ENCODE measurements at regions of chr4 and their contacts with region 1.

Region 1: DNA sequence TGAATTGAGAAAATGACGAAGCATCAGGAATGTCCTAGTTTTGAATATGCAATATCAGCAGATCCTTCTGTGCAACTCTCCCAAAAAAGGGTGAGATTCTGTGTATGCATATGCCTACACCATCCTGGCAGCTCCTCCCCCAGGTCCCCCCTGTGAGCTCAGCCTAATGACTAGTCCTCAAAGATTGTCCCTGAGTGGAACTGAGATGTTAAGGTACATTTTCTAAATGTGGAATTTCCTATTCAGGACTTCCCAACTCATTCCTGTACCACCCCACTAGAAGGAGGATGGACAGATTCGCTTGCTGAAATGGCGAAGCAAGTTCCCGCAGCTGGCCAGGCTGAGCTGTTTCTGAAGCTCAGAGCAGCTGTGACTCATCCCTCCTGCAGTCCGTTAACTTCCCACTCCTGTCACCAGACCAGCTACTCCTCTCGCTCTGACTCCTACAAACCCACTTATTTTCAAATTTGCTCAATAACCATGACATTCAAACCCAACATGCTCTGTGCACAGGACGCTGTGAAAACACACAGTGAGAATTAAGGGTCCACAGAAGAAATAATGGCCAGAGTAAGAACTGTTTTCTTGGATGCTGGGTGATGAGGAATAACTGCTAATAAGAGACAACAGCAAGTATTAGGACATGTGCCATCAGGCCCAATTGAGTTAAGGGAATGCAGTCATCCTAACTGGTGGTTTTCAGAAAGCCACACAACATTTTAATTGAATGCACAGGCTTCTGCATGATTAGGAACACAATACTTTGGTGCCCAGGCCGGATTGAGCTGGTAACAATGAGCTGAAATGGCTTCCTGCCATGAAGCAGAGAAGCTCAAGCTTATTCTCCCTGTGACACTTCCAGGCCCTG is 40.0 kb upstream of the IRF2 start:
- DNase-seq: peak; percentile 58
- H3K4me3 ChIP-seq: no peak overlapping the region
- H3K27ac ChIP-seq: no peak overlapping the region
- H3K4me1 ChIP-seq: peaks cover 14% of the 10 kb centered on the region
- H3K27me3 ChIP-seq: no peaks in the 10 kb centered on the region
- CTCF ChIP-seq: no peak

Region 2: GRCh38 chr4:183830438-183830985 is 683.8 kb before region 1 on chr4:
- CTCF ChIA-PET with region 1: no interaction called
- POLR2A ChIA-PET with region 1: interaction called, 16 read pairs
- intact Hi-C with region 1: no loop called
- DNase-seq: no peak
- H3K4me3 ChIP-seq: no peak overlapping the region
- H3K27ac ChIP-seq: no peak overlapping the region
- H3K4me1 ChIP-seq: no peaks in the 10 kb centered on the region
- H3K27me3 ChIP-seq: no peaks in the 10 kb centered on the region
- CTCF ChIP-seq: no peak